Caco-2 (cell line): ENCODE measurements at regions of chr11 and their contacts with region 1.

Region 1: GRCh38 chr11:57249384-57250319 is 12.6 kb upstream of the APLNR start:
- DNase-seq: peak; percentile 53 to 72
- H3K4me3 ChIP-seq: no peak overlapping the region
- H3K4me3 Mint-ChIP-seq: no peak overlapping the region
- H3K27ac Mint-ChIP-seq: no peak overlapping the region
- H3K4me1 ChIP-seq: no peaks in the 10 kb centered on the region
- H3K4me1 Mint-ChIP-seq: no peaks in the 10 kb centered on the region
- H3K27me3 ChIP-seq: peaks cover 1% of the 10 kb centered on the region; the same call in 1 of the 2 replicates
- H3K27me3 Mint-ChIP-seq: peaks cover 8% of the 10 kb centered on the region
- CTCF ChIP-seq: peak; percentile 84 to 91

Region 2: DNA sequence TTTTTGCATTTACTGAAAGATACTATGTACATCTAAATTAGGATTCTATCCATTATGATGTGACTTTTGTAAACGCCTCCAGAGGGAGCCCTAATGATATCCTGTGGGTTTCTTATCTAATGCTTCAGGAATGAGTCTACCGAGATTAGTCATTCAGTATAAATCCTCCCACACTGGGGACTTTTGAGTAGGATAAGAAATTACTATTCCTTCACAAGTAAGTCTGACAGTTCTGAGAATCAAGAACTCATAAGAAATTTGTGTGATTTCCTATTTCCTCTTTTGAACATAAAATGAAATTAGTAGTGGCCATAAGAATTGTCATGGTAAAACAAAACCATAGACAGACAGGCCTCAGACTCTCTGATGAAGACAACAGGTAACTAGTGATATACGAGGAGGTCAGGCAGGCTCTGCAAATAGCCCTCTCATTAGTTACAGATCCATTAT is 625.0 kb before region 1 on chr11:
- CTCF ChIA-PET with region 1: interaction called, 5 read pairs
- POLR2A ChIA-PET with region 1: no interaction called
- intact Hi-C with region 1: loop called (anchors 10 kb)
- DNase-seq: peak; percentile 36 to 58
- H3K4me3 ChIP-seq: no peak overlapping the region
- H3K4me3 Mint-ChIP-seq: no peak overlapping the region
- H3K27ac Mint-ChIP-seq: no peak overlapping the region
- H3K4me1 ChIP-seq: no peaks in the 10 kb centered on the region
- H3K4me1 Mint-ChIP-seq: no peaks in the 10 kb centered on the region
- H3K27me3 ChIP-seq: no peaks in the 10 kb centered on the region
- H3K27me3 Mint-ChIP-seq: peaks cover 12% of the 10 kb centered on the region
- CTCF ChIP-seq: peak; percentile 36 to 67

Region 3: GRCh38 chr11:57085611-57086010 is 164.0 kb before region 1 on chr11:
- CTCF ChIA-PET with region 1: interaction called, 8 read pairs
- POLR2A ChIA-PET with region 1: no interaction called
- intact Hi-C with region 1: loop called (anchors 1 kb)
- DNase-seq: no peak
- H3K4me3 ChIP-seq: no peak overlapping the region
- H3K4me3 Mint-ChIP-seq: no peak overlapping the region
- H3K27ac Mint-ChIP-seq: no peak overlapping the region
- H3K4me1 ChIP-seq: no peaks in the 10 kb centered on the region
- H3K4me1 Mint-ChIP-seq: no peaks in the 10 kb centered on the region
- H3K27me3 ChIP-seq: no peaks in the 10 kb centered on the region
- H3K27me3 Mint-ChIP-seq: no peaks in the 10 kb centered on the region
- CTCF ChIP-seq: no peak

Region 4: GRCh38 chr11:57121996-57122395 is 127.7 kb before region 1 on chr11:
- CTCF ChIA-PET with region 1: interaction called, 64 read pairs
- POLR2A ChIA-PET with region 1: interaction called, 3 read pairs
- intact Hi-C with region 1: no loop called
- DNase-seq: no peak
- H3K4me3 ChIP-seq: no peak overlapping the region
- H3K4me3 Mint-ChIP-seq: no peak overlapping the region
- H3K27ac Mint-ChIP-seq: no peak overlapping the region
- H3K4me1 ChIP-seq: peaks cover 5% of the 10 kb centered on the region; the same call in 1 of the 2 replicates
- H3K4me1 Mint-ChIP-seq: no peaks in the 10 kb centered on the region
- H3K27me3 ChIP-seq: no peaks in the 10 kb centered on the region
- H3K27me3 Mint-ChIP-seq: peaks cover 3% of the 10 kb centered on the region
- CTCF ChIP-seq: no peak

Region 5: GRCh38 chr11:57205041-57205671 is 44.5 kb before region 1 on chr11:
- CTCF ChIA-PET with region 1: interaction called, 10 read pairs
- POLR2A ChIA-PET with region 1: no interaction called
- intact Hi-C with region 1: loop called (anchors 5 kb)
- DNase-seq: peak in 1 of 2 experiments; percentile 3
- H3K4me3 ChIP-seq: no peak overlapping the region
- H3K4me3 Mint-ChIP-seq: no peak overlapping the region
- H3K27ac Mint-ChIP-seq: no peak overlapping the region
- H3K4me1 ChIP-seq: no peaks in the 10 kb centered on the region
- H3K4me1 Mint-ChIP-seq: no peaks in the 10 kb centered on the region
- H3K27me3 ChIP-seq: peaks cover 1% of the 10 kb centered on the region; the same call in 1 of the 2 replicates
- H3K27me3 Mint-ChIP-seq: peaks cover 14% of the 10 kb centered on the region
- CTCF ChIP-seq: no peak

Region 6: DNA sequence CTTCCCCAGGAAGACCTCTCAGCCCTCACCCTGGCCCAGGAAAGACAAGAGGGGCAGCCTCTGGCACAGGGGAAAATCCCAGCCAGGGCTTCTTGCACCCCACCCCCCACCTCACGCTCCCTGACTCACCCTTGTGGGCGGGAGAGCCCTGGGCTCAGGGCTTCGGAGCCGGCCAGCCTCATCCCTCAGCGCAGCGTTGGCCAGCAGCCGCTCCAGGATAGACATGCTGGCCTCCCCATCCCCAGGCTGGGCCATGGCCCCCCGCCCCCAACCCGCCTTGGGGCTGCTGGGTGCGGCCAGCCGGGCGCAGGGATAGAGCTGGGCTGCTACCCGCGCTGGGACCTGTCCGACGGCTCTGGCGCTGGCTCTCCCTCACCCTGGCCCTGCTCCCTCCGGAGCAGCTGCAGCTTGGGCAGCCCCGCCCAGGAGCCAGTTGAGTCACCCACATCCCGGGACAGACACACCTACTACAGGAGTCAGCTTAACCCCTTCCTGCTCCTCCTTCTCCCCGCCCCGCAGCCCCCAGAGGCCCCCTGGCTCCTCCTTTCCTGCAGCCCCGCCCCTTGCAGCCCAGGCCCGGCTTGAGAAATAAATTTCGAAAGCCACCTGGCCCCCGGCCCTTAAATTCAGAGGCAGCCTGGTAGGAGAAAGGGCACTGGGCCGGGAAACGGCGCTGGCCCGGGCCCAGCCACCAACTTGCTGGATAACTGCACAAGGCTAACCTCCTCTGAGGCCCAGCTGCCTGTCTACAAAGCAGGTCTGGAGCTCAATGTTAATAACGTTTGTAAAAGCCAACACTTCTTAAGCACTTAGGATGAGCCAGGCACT is 61.7 kb after region 1 on chr11:
- CTCF ChIA-PET with region 1: interaction called, 14 read pairs
- POLR2A ChIA-PET with region 1: no interaction called
- intact Hi-C with region 1: no loop called
- DNase-seq: peak; percentile 94 to 96
- H3K4me3 ChIP-seq: peak overlapping the region; percentile 55
- H3K4me3 Mint-ChIP-seq: peak overlapping the region; percentile 72
- H3K27ac Mint-ChIP-seq: peak overlapping the region; percentile 47
- H3K4me1 ChIP-seq: peaks cover 40% of the 10 kb centered on the region
- H3K4me1 Mint-ChIP-seq: peaks cover 35% of the 10 kb centered on the region
- H3K27me3 ChIP-seq: no peaks in the 10 kb centered on the region
- H3K27me3 Mint-ChIP-seq: no peaks in the 10 kb centered on the region
- CTCF ChIP-seq: no peak